Heart left ventricle (tissue), 16 donors: ENCODE measurements at regions of chr2 and their contacts with region 1.

Region 1: GRCh38 chr2:29059624-29060023 is 14.7 kb downstream of the PCARE start:
- DNase-seq: no peak
- ATAC-seq: no peak
- H3K4me3 ChIP-seq: no peak overlapping the region
- H3K27ac ChIP-seq: no peak overlapping the region
- H3K4me1 ChIP-seq: peaks cover 0 to 16% (median 0%) of the 10 kb centered on the region in 12 donors
- H3K27me3 ChIP-seq: no peaks in the 10 kb centered on the region
- CTCF ChIP-seq: no peak
- POLR2A ChIP-seq: no peak

Region 2: DNA sequence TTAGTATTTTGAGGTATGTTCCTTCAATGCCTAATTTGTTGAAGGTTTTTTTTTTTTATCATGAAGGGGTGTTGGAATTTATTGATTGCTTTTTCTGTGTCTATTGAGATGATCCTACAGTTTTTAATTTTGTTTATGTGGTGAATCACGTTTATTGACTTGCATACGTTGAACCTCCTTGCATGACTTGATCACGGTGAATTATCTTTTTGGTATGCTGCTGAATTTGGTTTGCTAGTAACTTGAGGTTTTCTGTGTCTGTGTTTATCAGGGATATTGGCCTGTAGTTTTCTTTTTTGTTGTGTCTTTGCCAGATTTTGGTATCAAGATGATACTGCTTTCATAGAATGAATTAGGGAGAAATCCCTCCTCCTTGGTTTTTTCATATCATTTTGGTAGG is 79.5 kb after region 1 on chr2:
- intact Hi-C with region 1: loop called in 1 of 10 experiments (anchors 5 kb)
- DNase-seq: no peak
- ATAC-seq: no peak
- H3K4me3 ChIP-seq: no peak overlapping the region
- H3K27ac ChIP-seq: no peak overlapping the region
- H3K4me1 ChIP-seq: no peaks in the 10 kb centered on the region
- H3K27me3 ChIP-seq: no peaks in the 10 kb centered on the region
- CTCF ChIP-seq: no peak
- POLR2A ChIP-seq: no peak

Region 3: DNA sequence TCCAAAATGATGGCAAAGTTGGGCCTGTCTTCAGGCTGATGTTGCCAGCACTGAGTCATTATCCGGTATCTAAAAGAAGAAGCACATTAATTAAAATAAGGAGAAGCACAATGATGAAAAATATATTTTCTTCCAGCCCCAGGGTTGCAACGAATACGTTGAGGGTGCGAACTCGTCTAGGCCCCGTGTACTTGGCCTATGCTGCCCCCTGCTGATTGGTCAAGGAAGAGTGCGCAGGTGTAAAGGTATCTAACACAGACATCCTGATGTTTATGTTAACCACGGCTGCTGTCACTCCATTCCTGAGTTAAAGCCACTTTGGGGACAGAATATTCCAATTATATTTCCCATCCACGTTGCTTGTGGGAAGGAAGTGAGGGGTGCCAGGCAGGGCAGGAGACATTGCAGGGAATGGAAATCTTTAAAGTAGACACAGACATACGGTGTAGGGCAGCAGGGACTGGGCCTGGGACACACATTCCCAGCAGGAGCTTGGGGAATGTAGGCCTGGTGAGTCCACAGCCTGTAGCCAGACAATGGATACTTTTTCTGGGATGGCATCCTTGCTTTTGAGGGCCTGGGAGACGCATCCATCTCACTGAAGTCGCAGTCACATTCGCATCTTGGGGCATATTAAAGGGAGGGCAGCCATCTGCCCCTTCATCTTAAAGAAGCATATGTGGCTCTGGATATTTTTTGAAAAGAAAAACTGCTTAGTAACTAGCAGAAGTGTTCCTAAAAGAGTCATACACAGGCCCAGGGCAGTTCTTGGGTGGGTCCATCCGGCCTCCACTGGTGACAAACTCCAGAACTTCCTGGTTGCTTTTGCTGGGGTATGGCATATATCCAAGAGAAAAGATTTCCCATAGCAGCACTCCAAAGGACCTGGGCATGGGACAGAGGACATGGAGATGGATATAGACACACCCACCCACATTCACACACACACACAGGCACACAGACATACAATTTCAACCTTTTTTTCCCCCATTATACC is 137.5 kb after region 1 on chr2:
- intact Hi-C with region 1: no loop called
- DNase-seq: peak; percentile 46 to 75 (median 59)
- ATAC-seq: peak; percentile 67 to 88 (median 86)
- H3K4me3 ChIP-seq: no peak overlapping the region
- H3K27ac ChIP-seq: no peak overlapping the region
- H3K4me1 ChIP-seq: peaks cover 0 to 8% (median 0%) of the 10 kb centered on the region in 12 donors
- H3K27me3 ChIP-seq: no peaks in the 10 kb centered on the region
- CTCF ChIP-seq: peak; percentile 66 to 82 (median 76)
- POLR2A ChIP-seq: no peak